Dorsolateral prefrontal cortex (tissue), 120 donors: ENCODE measurements at regions of chr7 and their contacts with region 1.

Region 1: GRCh38 chr7:2241580-2242540 is at the starts of genes MRM2 and NUDT1:
- DNase-seq: peak; percentile 71 to 91 (median 81)
- H3K4me3 ChIP-seq: peak within 1 kb of the TSS; percentile 57 to 100 (median 94)
- H3K27ac ChIP-seq: peak within 1 kb of the TSS in 39 of 59 donors; percentile 10 to 84 (median 54)
- H3K27me3 ChIP-seq: no peaks in the 10 kb centered on the region
- CTCF ChIP-seq: peak in 13 of 56 donors; percentile 9 to 42 (median 18)
- total RNA-seq, gene MRM2: 12.1 to 24.5 (median 18.5) TPM
- total RNA-seq, gene NUDT1: 2.3 to 17.6 (median 9.9) TPM

Region 2: DNA sequence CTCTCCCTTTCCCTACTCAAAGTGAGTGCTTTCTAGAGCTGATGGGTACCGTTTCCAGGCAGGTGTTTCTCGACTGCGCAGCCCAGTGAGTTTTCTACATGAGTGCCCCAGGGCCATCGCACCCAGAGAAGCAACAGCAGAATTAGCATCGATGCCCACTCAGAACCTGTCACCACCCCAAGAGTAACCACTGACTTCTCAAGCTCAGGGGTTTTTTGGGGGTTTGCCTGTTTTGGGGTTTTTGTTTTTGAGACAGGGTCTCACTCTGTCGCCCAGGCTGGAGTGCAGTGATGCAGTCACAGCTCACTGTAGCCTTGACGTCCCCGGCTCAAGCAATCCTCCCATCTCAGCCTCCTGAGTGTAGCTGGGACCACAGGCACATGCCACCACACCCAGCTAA is 46.6 kb after region 1 on chr7:
- intact Hi-C with region 1: no loop called
- DNase-seq: no peak
- H3K4me3 ChIP-seq: peak overlapping the region in 2 of 59 donors; percentile 24
- H3K27ac ChIP-seq: peak overlapping the region in 11 of 59 donors; percentile 30 to 83 (median 45)
- H3K27me3 ChIP-seq: no peaks in the 10 kb centered on the region
- CTCF ChIP-seq: no peak

Region 3: DNA sequence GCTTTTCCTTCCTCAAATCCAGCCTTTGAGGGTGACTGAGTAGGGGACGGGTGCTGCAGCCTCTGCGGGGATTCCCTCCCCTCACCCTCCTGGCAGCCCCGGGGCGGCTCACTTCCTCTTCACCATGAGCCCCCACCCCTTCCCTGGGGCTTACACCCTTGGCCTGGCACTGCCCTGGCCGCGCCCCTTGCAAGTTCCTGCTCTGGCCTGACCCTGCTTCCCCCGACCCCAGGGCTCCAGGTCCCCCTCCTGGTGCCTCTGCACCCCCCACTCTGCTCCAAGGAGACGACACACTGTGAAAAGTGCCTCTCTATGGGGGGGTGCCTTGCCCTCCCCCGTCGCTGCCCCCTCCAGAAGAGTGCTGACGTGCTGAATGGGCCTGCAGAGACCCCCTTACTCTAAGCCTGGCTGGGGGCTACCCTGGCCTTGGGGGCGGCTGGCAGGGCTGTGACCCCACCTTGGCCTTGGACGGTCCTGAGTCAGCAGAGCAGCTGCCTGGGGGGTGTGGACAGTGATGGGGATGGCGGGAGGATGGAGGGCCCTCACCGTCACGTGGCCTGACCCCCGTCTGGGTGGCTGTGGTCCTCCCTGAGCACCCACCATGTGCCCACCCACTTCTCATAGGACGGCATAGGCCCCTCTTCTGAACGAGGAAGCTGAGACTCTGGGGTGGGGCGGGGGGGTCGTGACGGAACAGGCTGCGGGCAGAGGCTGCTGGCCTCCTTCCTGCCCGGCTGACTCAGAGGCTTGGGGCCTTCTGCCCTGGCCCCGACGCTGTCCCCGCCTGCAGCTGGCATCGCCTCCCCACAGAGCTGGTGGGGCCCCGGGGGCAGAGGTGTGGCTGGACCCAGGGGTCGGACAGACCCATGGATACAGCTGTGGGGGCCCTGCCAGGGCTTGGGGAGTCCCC is 287.6 kb after region 1 on chr7:
- intact Hi-C with region 1: loop called in 1 of 2 experiments (anchors 10 kb)
- DNase-seq: peak in 1 of 10 donors; percentile 57
- H3K4me3 ChIP-seq: no peak overlapping the region
- H3K27ac ChIP-seq: peak overlapping the region in 32 of 59 donors; percentile 1 to 75 (median 44)
- H3K27me3 ChIP-seq: peaks cover 0 to 10% (median 0%) of the 10 kb centered on the region in 45 donors
- CTCF ChIP-seq: no peak